Endothelial cell of umbilical vein (primary cell): ENCODE measurements at regions of chr11 and their contacts with region 1.

Region 1: DNA sequence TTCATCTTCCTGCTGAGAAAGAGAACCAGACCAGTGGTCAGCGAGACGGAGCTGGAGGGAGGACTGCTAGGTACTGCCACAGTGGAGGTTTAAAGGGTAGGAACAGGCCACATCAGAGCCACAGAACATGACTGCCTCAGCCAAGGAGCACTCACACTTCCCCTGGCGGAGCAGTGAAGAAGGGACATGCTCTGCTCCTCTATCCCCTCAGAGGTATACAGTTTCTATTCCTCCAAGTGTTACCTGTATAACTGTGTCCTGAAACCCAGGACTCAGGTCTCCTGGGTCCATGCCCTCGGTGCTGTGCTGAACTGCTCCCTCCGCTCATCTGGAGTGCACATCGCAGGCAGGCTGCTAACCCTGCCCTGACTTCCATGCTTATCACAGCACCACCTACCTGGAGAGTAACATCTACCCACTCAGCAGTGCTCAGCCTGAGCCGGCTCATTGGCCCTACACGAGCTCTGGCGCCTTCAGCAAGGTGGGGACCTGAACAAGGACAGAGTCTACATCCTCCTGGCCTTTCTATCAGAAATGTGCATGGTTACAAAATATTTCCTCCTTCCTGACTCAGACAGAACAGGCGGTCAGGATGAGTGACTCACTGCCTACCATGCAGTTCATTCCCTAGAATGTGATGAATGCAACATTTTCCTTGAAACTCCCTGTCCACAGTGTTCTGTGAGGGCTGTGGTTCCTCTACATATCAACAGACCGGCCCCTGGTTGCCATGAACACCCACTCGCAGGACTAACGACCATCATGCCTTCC is 52.9 kb downstream of the C11orf58 start:
- DNase-seq: peak; percentile 94
- H3K4me3 ChIP-seq: no peak overlapping the region
- H3K27ac ChIP-seq: peak overlapping the region; percentile 89
- H3K4me1 ChIP-seq: peaks cover 52% of the 10 kb centered on the region
- H3K27me3 ChIP-seq: no peaks in the 10 kb centered on the region
- CTCF ChIP-seq: no peak
- POLR2A ChIP-seq: peak; percentile 55

Region 2: DNA sequence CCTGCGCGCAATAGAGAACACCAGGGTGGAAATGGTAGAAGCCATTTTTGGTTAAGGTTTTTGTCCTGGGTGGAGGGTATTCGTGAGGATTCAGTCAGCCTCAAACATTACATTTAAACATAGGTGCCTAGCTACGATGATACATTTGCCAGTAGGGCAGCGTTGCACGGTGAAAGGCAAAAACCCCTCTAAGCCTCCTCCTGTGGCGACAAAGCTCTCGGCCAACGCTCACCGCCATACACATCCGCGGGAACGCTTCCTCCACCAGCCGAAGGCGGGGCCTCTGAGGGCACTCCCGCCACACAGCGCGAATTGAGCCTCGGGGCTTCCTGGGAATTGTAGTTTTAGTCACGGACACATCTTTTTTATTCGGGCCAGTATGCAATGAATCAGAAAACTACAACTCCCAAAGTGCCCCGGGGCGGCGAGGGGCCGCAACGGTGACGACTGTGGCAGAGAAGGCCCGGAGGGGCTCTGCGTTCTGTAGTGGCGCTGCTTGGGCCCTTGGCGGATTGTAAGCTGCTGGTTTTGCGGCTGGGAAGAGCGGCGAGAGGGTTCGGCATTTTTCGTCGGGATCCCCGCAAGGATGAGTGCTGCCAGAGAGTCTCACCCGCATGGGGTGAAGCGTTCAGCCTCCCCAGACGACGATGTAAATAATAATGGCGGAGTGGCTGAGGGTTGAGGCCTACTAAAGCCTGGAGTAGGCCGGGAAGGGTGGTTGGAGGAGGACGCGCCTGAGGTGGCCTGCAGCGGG is 53.0 kb before region 1 on chr11 and contains the start of gene C11orf58:
- CTCF ChIA-PET with region 1: no interaction called
- POLR2A ChIA-PET with region 1: no interaction called
- dilution Hi-C with region 1: no loop called
- intact Hi-C with region 1: loop called (anchors 2 kb)
- DNase-seq: peak; percentile 99
- H3K4me3 ChIP-seq: peak within 1 kb of the TSS; percentile 80 to 94 (median 87)
- H3K27ac ChIP-seq: peak within 1 kb of the TSS; percentile 98
- H3K4me1 ChIP-seq: peaks cover 18% of the 10 kb centered on the region
- H3K27me3 ChIP-seq: no peaks in the 10 kb centered on the region
- CTCF ChIP-seq: no peak
- POLR2A ChIP-seq: peak; percentile 92
- total RNA-seq, gene C11orf58: 131 and 150 TPM in 2 replicates

Region 3: DNA sequence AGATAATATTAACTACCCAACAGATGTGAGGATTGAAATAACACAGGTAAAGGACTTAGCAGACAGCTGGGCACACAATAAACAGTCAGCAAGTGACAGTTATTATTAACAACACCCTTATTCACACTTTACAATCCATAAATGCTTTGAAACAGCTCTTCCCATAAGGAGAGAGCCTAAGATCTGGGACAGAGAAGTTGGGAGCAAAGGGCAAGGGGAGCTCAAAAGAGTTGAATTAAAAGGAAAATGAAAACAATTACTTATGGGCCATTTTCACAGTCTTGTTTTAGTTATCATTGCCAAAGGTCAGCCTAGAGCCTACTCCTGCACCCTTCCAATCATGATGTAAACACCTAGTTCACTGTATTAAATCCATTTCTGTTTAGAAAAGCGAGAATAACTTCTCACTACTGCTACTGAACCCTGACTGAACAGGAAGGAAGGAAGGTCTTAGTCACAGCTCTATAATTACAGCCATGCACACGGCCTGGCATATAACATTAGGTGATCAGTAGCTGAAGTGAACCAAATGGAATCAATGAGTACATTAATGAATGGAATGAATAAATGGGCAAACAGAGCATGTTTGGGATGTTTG is 111.5 kb after region 1 on chr11:
- CTCF ChIA-PET with region 1: no interaction called
- POLR2A ChIA-PET with region 1: no interaction called
- dilution Hi-C with region 1: no loop called
- intact Hi-C with region 1: loop called (anchors 2 kb)
- DNase-seq: peak; percentile 80
- H3K4me3 ChIP-seq: peak overlapping the region in 1 of 3 experiments; percentile 20
- H3K27ac ChIP-seq: peak overlapping the region; percentile 72
- H3K4me1 ChIP-seq: peaks cover 26% of the 10 kb centered on the region
- H3K27me3 ChIP-seq: no peaks in the 10 kb centered on the region
- CTCF ChIP-seq: no peak
- POLR2A ChIP-seq: no peak

Region 4: GRCh38 chr11:17014838-17015626 is 223.7 kb after region 1 on chr11:
- CTCF ChIA-PET with region 1: no interaction called
- POLR2A ChIA-PET with region 1: no interaction called
- dilution Hi-C with region 1: no loop called
- intact Hi-C with region 1: loop called (anchors 2 kb)
- DNase-seq: peak; percentile 50
- H3K4me3 ChIP-seq: peak overlapping the region; percentile 12 to 66 (median 40)
- H3K27ac ChIP-seq: no peak overlapping the region
- H3K4me1 ChIP-seq: peaks cover 8% of the 10 kb centered on the region
- H3K27me3 ChIP-seq: no peaks in the 10 kb centered on the region
- CTCF ChIP-seq: peak; percentile 65 to 79
- POLR2A ChIP-seq: no peak